ENCODE measurements at regions of chr6 and their contacts with region 1.

Region 1: GRCh38 chr6:154715446-154715845 is 17.8 kb upstream of the SCAF8 start:
- H3K4me3 ChIP-seq: no peak overlapping the region
- H3K27ac ChIP-seq: no peak overlapping the region
- H3K4me1 ChIP-seq: no peaks in the 10 kb centered on the region
- CTCF ChIP-seq: no peak

Region 2: DNA sequence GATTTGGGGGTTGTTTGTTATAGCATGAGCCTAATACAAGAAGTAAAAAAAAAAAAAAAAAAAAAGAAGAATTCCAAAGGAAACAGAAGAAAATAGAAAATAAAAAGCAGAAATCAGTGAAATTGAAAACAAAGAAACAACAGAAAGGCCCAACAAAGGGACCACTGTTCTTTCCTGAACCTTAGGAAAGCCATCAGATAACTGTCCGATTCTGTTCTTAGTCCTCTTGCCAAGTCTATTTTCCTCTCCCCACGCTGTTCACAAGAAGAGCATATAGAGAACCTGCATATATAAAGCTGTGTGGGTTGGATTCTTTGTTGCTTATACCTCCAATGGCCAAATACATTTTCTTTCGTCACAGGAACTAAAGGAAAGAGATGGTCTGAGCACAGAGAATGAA is 320.9 kb before region 1 on chr6:
- CTCF ChIA-PET with region 1: no interaction called
- POLR2A ChIA-PET with region 1: interaction called, 12 read pairs
- H3K4me3 ChIP-seq: no peak overlapping the region
- H3K27ac ChIP-seq: no peak overlapping the region
- H3K4me1 ChIP-seq: no peaks in the 10 kb centered on the region
- CTCF ChIP-seq: no peak

Region 3: GRCh38 chr6:154733012-154733625 is 17.7 kb after region 1 on chr6 and contains the start of gene SCAF8:
- CTCF ChIA-PET with region 1: no interaction called
- POLR2A ChIA-PET with region 1: no interaction called
- H3K4me3 ChIP-seq: peak within 1 kb of the TSS; percentile 94
- H3K27ac ChIP-seq: peak within 1 kb of the TSS; percentile 98
- H3K4me1 ChIP-seq: peaks cover 7% of the 10 kb centered on the region
- CTCF ChIP-seq: peak; percentile 80

Region 4: GRCh38 chr6:154754152-154754551 is 38.7 kb after region 1 on chr6:
- CTCF ChIA-PET with region 1: interaction called, 10 read pairs
- POLR2A ChIA-PET with region 1: no interaction called
- H3K4me3 ChIP-seq: no peak overlapping the region
- H3K27ac ChIP-seq: no peak overlapping the region
- H3K4me1 ChIP-seq: peaks cover 12% of the 10 kb centered on the region
- CTCF ChIP-seq: no peak

Measured in HEK293 (cell line).